Transverse colon (tissue), 4 donors: ENCODE measurements at regions of chr17 and their contacts with region 1.

Region 1: DNA sequence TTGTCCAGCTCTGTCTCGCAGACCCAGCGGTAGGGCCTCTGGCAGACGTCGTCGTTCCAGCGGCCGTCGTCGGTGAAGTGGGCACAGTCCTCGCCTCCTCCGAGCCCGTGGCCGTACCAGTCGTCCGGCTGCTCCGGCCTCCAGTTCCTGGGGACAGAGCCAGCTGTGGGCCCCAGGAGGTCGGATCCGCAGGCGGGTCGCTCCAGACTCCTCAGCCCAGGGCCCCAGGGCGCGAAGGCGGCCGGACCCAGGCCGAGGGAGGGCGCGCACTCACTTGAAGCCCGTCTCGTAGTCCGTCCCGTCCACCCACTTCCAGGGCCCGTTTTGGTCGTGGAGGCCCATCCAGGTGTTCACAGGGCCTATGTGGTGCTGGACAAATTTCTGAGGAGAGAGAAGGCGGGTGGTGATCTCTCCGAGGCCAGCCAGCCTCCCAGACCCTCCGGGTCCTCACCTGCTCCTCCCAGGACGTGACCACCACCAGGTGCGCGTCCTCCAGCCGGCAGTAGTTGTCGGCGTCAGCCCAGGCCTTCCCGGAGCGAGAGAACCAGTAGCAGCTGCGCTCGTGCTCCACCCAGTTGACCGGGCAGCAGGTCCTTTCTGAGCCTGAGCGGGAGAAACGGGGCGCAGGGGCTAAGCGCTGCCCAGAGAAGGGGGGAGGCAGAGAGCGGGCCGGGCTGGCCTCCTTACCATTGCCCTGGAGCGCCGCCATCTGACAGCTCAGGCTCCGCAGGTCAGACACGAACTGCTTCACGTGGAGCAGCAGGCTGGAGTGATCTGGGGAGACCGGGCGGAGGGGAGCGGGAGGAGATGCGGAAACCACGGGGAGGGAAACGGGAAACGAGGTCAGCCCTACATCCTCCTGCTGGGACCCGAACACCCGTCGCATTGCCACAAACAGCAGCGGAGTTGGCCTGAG is 5.2 kb downstream of the ASGR1 start:
- DNase-seq: peak; percentile 50
- H3K4me3 ChIP-seq: no peak overlapping the region
- H3K27ac ChIP-seq: no peak overlapping the region
- H3K4me1 ChIP-seq: peaks cover 3 to 15% (median 14%) of the 10 kb centered on the region in 4 donors
- H3K27me3 ChIP-seq: peaks cover 16% of the 10 kb centered on the region
- CTCF ChIP-seq: no peak
- EP300 ChIP-seq: no peak
- POLR2A ChIP-seq: no peak

Region 2: GRCh38 chr17:6908807-6909206 is 265.1 kb before region 1 on chr17:
- in situ Hi-C with region 1: loop called in 1 of 4 experiments (anchors 25 kb)
- intact Hi-C with region 1: loop called (anchors 5 kb)
- DNase-seq: no peak
- H3K4me3 ChIP-seq: no peak overlapping the region
- H3K27ac ChIP-seq: no peak overlapping the region
- H3K4me1 ChIP-seq: peaks cover 0 to 3% (median under 1%) of the 10 kb centered on the region in 4 donors
- H3K27me3 ChIP-seq: peaks cover 12% of the 10 kb centered on the region
- CTCF ChIP-seq: no peak
- EP300 ChIP-seq: no peak
- POLR2A ChIP-seq: no peak

Region 3: DNA sequence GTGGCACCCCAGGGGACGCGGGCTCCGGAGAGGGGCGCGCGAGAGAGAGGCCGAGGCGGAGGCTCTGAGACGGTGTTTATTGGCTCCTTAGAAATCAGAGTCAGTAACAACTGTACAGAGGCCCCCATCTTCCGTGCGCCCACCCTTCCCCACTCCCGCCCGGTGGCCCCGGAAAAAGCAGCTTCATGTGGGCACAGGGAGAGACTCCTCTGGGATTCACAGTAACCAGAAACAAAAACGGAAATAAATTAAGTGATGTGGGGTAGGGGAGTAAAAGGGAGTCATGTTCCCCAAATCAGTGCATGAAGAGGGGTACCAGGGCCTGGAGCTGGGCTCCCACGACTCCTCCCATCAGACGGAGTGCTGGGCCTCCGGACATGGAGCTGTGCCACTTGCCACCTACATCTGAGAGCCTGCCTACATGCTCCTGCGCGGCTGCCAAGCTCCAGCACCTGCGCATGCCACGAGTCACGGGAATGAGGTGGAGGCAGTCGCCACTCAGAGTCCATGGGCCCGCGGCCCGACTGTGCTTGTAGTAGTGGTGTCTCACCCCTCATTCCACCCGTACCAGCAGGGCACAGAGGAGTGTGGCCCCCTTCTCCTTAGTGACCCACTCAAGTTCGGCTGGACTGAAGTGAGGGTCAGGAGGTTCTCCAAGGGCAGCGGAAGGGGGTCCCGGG is 141.8 kb after region 1 on chr17:
- in situ Hi-C with region 1: no loop called
- intact Hi-C with region 1: no loop called
- DNase-seq: no peak
- H3K4me3 ChIP-seq: peak overlapping the region; percentile 30 to 94 (median 91)
- H3K27ac ChIP-seq: peak overlapping the region; percentile 93 to 98 (median 95)
- H3K4me1 ChIP-seq: peaks cover 11 to 34% (median 18%) of the 10 kb centered on the region in 4 donors
- H3K27me3 ChIP-seq: no peaks in the 10 kb centered on the region
- CTCF ChIP-seq: no peak
- EP300 ChIP-seq: no peak
- POLR2A ChIP-seq: no peak

Region 4: DNA sequence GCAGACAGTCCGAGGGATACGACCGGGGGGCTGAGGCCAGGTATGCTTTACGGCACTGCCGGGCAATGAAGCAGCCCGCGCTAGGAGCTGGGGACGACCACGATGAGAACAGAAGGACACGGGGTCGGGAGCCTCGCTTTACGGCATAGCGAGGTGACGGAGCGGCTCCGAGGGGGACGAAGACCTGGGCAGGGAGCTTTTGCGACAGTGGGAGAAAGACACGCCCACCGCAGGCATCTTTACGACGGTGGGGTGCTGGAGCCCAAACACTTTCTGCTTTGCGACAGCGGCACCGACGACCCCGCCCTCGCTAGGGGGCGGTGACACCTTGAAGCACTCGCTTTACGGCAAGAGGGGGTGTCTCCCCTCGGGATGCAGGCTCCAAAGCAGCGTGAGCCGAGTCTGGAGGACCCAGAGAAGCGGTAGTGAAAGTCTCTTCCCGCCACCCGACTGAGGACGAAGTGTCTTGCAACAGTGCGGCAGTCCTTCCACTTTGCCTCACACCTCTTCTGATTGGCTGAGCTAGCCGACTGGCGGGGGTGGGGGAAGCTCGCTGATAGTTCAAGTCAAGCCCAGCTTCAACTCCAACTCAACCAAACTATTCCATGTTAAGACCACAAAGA is 155.5 kb after region 1 on chr17:
- in situ Hi-C with region 1: no loop called
- intact Hi-C with region 1: no loop called
- DNase-seq: peak; percentile 99
- H3K4me3 ChIP-seq: peak overlapping the region; percentile 63 to 89 (median 77)
- H3K27ac ChIP-seq: peak overlapping the region; percentile 90 to 95 (median 92)
- H3K4me1 ChIP-seq: peaks cover 7 to 21% (median 14%) of the 10 kb centered on the region in 4 donors
- H3K27me3 ChIP-seq: no peaks in the 10 kb centered on the region
- CTCF ChIP-seq: no peak
- EP300 ChIP-seq: no peak
- POLR2A ChIP-seq: peak; percentile 79